Panc1 (cell line): ENCODE measurements at regions of chr10 and their contacts with region 1.

Region 1: GRCh38 chr10:120948889-120949608 is 97.9 kb downstream of the WDR11 start:
- DNase-seq: no peak
- ATAC-seq: peak; percentile 98
- H3K4me3 ChIP-seq: peak overlapping the region; percentile 39 to 64
- H3K27ac ChIP-seq: no peak overlapping the region
- H3K4me1 ChIP-seq: peaks cover 8% of the 10 kb centered on the region
- H3K27me3 ChIP-seq: peaks cover 22% of the 10 kb centered on the region
- CTCF ChIP-seq: peak; percentile 99

Region 2: DNA sequence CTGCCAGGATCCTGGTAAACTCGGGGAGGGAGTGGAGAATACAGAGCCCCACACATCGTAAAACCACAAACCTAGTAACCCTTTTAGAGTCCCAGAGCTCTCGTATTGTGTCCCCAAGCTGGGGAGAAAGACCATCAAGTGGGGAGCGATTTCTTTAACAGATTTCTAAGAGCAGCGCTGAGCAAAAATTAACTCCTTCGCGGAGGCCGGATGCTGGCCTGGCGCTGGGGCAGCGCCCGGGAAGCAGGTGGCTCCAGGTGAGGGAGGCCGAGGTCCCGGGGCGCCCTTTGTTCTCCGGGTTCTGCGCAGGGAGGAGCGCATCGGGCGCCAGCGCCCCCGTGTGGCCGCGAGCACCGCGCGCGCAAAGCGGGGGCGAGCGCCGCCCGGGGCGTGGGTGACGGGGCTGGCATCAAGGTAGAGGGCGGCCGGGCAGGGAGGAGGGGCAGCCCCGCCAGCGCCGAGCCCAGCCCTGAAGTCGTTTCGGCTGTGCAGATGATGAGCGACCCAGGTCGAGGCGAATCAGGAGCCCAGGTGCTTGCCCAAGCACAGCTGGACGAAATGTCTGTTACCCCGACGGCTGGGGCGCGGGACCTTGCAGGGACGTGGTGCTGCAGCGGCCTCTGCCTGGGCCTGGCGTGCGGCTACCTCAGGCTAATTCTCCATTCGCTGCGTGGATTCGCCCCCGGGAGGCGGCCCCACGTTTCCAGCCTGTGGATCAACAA is 659.6 kb after region 1 on chr10:
- CTCF ChIA-PET with region 1: no interaction called
- POLR2A ChIA-PET with region 1: no interaction called
- in situ Hi-C with region 1: no loop called
- intact Hi-C with region 1: loop called (anchors 2 kb)
- DNase-seq: no peak
- ATAC-seq: peak; percentile 88
- H3K4me3 ChIP-seq: peak overlapping the region; percentile 34 to 55
- H3K27ac ChIP-seq: no peak overlapping the region
- H3K4me1 ChIP-seq: peaks cover 3% of the 10 kb centered on the region; the same call in 1 of the 2 replicates
- H3K27me3 ChIP-seq: peaks cover 11% of the 10 kb centered on the region
- CTCF ChIP-seq: peak; percentile 100